CD8-positive, alpha-beta T cell (primary cell): ENCODE measurements at regions of chr20 and their contacts with region 1.

Region 1: DNA sequence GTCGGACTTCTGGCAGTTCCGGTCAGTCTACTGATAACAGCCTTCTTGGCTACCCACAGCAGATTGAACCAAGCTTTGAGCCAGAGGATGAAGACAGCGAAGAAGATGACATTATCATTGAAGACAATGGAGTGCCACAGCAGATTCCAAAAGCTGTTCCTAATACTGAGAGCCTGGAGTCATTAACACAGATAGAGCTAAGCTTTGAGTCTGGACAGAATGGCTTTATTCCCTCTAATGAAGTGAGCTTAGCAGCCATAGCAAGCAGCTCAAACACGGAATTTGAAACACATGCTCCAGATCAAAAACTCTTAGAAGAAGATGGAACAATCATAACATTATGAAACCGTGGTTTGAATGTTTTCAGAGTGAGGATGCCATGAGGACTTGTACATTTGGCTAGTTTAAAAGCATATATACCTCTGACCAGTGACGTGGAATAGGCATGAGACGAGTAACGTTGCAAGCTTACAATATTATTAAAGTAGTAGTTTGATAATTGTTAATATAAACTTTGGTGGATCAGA is 18.8 kb downstream of the PARD6B start:
- DNase-seq: no peak
- ATAC-seq: no peak
- H3K4me3 ChIP-seq: no peak overlapping the region
- H3K4me3 Mint-ChIP-seq: no peak overlapping the region
- H3K27ac ChIP-seq: no peak overlapping the region
- H3K27ac Mint-ChIP-seq: no peak overlapping the region
- H3K4me1 ChIP-seq: no peaks in the 10 kb centered on the region
- H3K4me1 Mint-ChIP-seq: peaks cover 14% of the 10 kb centered on the region
- H3K27me3 ChIP-seq: no peaks in the 10 kb centered on the region
- H3K27me3 Mint-ChIP-seq: no peaks in the 10 kb centered on the region
- CTCF ChIP-seq: no peak

Region 2: GRCh38 chr20:49775229-49775693 is 974.9 kb before region 1 on chr20:
- CTCF ChIA-PET with region 1: no interaction called
- POLR2A ChIA-PET with region 1: no interaction called
- intact Hi-C with region 1: no loop called
- DNase-seq: no peak
- ATAC-seq: no peak
- H3K4me3 ChIP-seq: no peak overlapping the region
- H3K4me3 Mint-ChIP-seq: no peak overlapping the region
- H3K27ac ChIP-seq: no peak overlapping the region
- H3K27ac Mint-ChIP-seq: no peak overlapping the region
- H3K4me1 ChIP-seq: no peaks in the 10 kb centered on the region
- H3K4me1 Mint-ChIP-seq: peaks cover 6% of the 10 kb centered on the region
- H3K27me3 ChIP-seq: no peaks in the 10 kb centered on the region
- H3K27me3 Mint-ChIP-seq: peaks cover 11% of the 10 kb centered on the region
- CTCF ChIP-seq: no peak

Region 3: DNA sequence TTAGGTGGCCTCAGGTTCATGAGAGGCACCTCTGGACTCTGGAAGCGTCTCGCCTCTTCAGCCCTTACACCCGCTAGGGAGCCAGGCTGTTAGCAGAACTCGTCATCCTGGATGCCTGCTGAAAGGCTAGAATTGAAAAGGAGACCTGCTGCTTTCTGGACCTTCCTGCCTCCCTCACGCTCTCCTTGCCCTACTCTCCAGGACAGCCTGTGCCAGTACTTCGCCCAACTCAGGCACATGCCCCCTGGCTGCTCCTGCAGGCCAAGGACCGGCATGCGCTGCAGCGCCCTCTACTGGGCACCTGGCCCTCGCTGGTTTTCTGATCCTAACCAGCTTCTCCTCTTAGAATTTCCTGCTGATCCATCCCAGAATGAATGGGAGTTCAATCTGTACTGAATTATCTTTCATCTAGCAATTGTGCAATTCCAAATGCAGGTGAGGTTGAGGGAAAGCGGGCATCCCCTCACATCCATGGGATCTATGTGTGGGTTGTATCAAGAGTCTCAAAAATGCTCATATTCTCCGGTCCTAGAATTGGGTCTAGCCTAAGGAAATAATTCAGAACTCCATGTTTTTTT is 162.1 kb before region 1 on chr20:
- CTCF ChIA-PET with region 1: interaction called, 4 read pairs
- POLR2A ChIA-PET with region 1: no interaction called
- intact Hi-C with region 1: loop called in 1 of 2 experiments (anchors 1 kb)
- DNase-seq: peak; percentile 45 to 81 (median 74)
- ATAC-seq: peak; percentile 74
- H3K4me3 ChIP-seq: no peak overlapping the region
- H3K4me3 Mint-ChIP-seq: no peak overlapping the region
- H3K27ac ChIP-seq: no peak overlapping the region
- H3K27ac Mint-ChIP-seq: no peak overlapping the region
- H3K4me1 ChIP-seq: no peaks in the 10 kb centered on the region
- H3K4me1 Mint-ChIP-seq: no peaks in the 10 kb centered on the region
- H3K27me3 ChIP-seq: no peaks in the 10 kb centered on the region
- H3K27me3 Mint-ChIP-seq: no peaks in the 10 kb centered on the region
- CTCF ChIP-seq: peak; percentile 96

Region 4: DNA sequence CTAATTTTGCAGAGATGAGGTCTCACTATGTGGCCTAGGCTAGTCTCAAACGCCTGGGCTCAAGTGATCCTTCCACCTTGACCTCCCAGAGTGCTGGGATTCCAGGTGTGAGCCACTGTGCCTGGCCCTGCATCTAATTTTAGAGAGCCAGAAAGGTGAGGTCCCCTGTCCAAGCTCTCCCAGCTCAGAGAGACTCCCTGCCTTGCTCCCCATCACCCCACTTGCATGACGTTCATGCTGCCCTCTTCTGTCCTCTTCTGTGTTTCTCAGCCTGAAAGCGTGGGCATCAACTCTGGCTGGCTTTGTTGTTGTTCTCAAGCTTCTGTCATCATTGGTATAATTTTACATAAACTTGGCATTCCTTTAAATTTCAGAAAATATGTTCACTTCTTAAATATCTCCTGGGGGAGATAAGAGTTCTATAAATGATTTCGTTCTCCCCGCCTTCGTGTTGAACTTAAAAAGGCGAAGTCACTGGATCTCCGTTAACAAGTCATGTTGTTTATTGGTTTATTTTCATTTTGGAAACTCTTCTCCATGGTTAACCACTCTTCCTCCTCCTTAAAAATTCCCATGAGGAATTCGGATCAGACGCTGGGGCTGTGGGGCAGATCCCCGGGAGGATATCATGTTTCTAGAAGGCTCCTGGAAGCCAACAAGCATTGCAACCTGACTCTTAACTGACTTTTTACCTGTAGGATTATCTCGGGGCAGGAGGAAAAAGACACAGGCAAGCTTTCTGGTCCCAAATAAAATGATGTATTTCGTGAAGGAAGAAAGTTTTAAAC is 32.0 kb before region 1 on chr20:
- CTCF ChIA-PET with region 1: interaction called, 10 read pairs
- POLR2A ChIA-PET with region 1: no interaction called
- intact Hi-C with region 1: no loop called
- DNase-seq: no peak
- ATAC-seq: no peak
- H3K4me3 ChIP-seq: no peak overlapping the region
- H3K4me3 Mint-ChIP-seq: no peak overlapping the region
- H3K27ac ChIP-seq: no peak overlapping the region
- H3K27ac Mint-ChIP-seq: no peak overlapping the region
- H3K4me1 ChIP-seq: no peaks in the 10 kb centered on the region
- H3K4me1 Mint-ChIP-seq: no peaks in the 10 kb centered on the region
- H3K27me3 ChIP-seq: no peaks in the 10 kb centered on the region
- H3K27me3 Mint-ChIP-seq: peaks cover 10% of the 10 kb centered on the region
- CTCF ChIP-seq: no peak

Region 5: GRCh38 chr20:50765674-50766073 is 15.5 kb after region 1 on chr20:
- CTCF ChIA-PET with region 1: interaction called, 11 read pairs
- POLR2A ChIA-PET with region 1: interaction called, 3 read pairs
- intact Hi-C with region 1: no loop called
- DNase-seq: no peak
- ATAC-seq: no peak
- H3K4me3 ChIP-seq: no peak overlapping the region
- H3K4me3 Mint-ChIP-seq: no peak overlapping the region
- H3K27ac ChIP-seq: no peak overlapping the region
- H3K27ac Mint-ChIP-seq: no peak overlapping the region
- H3K4me1 ChIP-seq: no peaks in the 10 kb centered on the region
- H3K4me1 Mint-ChIP-seq: no peaks in the 10 kb centered on the region
- H3K27me3 ChIP-seq: no peaks in the 10 kb centered on the region
- H3K27me3 Mint-ChIP-seq: no peaks in the 10 kb centered on the region
- CTCF ChIP-seq: no peak